ENCODE measurements at regions of chr6 and their contacts with region 1.

Region 1: GRCh38 chr6:32413427-32414047 is 6.6 kb upstream of the BTNL2 start:
- DNase-seq: peak in 1 of 2 donors; percentile 81
- H3K4me3 ChIP-seq: no peak overlapping the region
- H3K27ac ChIP-seq: no peak overlapping the region
- H3K4me1 ChIP-seq: peaks cover 0 to 3% of the 10 kb centered on the region in 2 donors
- H3K27me3 ChIP-seq: no peaks in the 10 kb centered on the region
- CTCF ChIP-seq: peak; percentile 71 to 90 (median 88)

Region 2: GRCh38 chr6:32393665-32394420 is 19.7 kb before region 1 on chr6:
- intact Hi-C with region 1: no loop called
- DNase-seq: no peak
- H3K4me3 ChIP-seq: no peak overlapping the region
- H3K27ac ChIP-seq: peak overlapping the region in 1 of 2 donors; percentile 7
- H3K4me1 ChIP-seq: no peaks in the 10 kb centered on the region
- H3K27me3 ChIP-seq: no peaks in the 10 kb centered on the region
- CTCF ChIP-seq: no peak

Region 3: DNA sequence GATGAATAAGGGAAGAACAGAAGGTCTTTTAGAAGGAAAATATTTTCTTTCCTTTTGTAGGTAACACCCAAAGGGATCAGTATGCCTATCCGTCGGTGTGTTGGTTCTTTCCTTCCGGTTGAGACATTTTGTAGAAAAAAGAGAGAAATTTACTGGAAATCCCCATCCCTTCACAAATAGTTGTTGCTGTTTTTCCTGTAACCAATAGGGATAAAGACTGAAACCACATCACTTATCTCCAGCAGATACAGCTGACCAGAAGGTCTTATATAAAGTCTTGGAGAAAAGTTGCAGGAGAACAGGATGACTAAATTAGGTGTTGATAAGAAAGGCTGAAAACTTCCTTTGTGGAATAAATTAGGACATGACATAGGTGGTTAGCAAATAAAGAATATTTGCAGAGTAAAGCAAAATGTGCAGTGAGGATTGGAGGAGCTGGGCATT is 190.9 kb after region 1 on chr6:
- intact Hi-C with region 1: no loop called
- DNase-seq: no peak
- H3K4me3 ChIP-seq: no peak overlapping the region
- H3K27ac ChIP-seq: peak overlapping the region in 1 of 2 donors; percentile 16
- H3K4me1 ChIP-seq: no peaks in the 10 kb centered on the region
- H3K27me3 ChIP-seq: no peaks in the 10 kb centered on the region
- CTCF ChIP-seq: no peak

Region 4: GRCh38 chr6:32796848-32797776 is 383.6 kb after region 1 on chr6:
- intact Hi-C with region 1: loop called (anchors 1 kb)
- DNase-seq: peak in 1 of 2 donors; percentile 86
- H3K4me3 ChIP-seq: peak overlapping the region; percentile 19 to 45
- H3K27ac ChIP-seq: no peak overlapping the region
- H3K4me1 ChIP-seq: no peaks in the 10 kb centered on the region
- H3K27me3 ChIP-seq: peaks cover 4% of the 10 kb centered on the region
- CTCF ChIP-seq: peak; percentile 80 to 89 (median 88)

Measured in ascending aorta (tissue), 2 donors.